Activated CD4-positive, alpha-beta memory T cell treated with anti-CD3 and anti-CD28 coated beads for 36 hours (primary cell): ENCODE measurements at regions of chr3 and their contacts with region 1.

Region 1: GRCh38 chr3:12193485-12194165 is 34.9 kb upstream of the TIMP4 start:
- DNase-seq: peak; percentile 66
- H3K4me3 Mint-ChIP-seq: no peak overlapping the region
- H3K27ac Mint-ChIP-seq: peak overlapping the region; percentile 84
- H3K4me1 Mint-ChIP-seq: peaks cover 54% of the 10 kb centered on the region
- H3K27me3 Mint-ChIP-seq: peaks cover 7% of the 10 kb centered on the region

Region 2: DNA sequence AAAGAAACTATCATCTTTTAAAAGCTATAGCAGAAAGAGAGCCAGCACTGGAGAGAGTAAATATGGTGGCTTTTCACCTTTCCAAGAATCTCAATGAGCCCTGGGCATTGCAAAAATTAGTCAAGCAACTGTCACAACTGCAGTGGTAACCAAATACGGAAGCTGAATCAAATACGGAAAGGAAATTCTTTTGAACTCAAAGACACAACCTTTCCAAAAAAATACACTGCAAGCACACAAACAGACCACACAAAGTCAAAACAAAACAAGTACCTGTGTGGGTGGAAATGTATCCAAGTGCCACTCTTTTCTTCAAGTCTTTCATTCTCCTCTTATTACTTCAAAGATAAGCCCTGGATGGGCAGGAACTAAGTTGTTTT is 567.6 kb before region 1 on chr3:
- CTCF ChIA-PET with region 1: no interaction called
- POLR2A ChIA-PET with region 1: no interaction called
- intact Hi-C with region 1: loop called (anchors 5 kb)
- DNase-seq: peak; percentile 38
- H3K4me3 Mint-ChIP-seq: no peak overlapping the region
- H3K27ac Mint-ChIP-seq: peak overlapping the region; percentile 4
- H3K4me1 Mint-ChIP-seq: peaks cover 59% of the 10 kb centered on the region
- H3K27me3 Mint-ChIP-seq: peaks cover 1% of the 10 kb centered on the region

Region 3: GRCh38 chr3:12135029-12135657 is 58.5 kb before region 1 on chr3:
- CTCF ChIA-PET with region 1: interaction called, 24 read pairs
- POLR2A ChIA-PET with region 1: no interaction called
- intact Hi-C with region 1: loop called (anchors 2 kb)
- DNase-seq: peak; percentile 78
- H3K4me3 Mint-ChIP-seq: no peak overlapping the region
- H3K27ac Mint-ChIP-seq: no peak overlapping the region
- H3K4me1 Mint-ChIP-seq: no peaks in the 10 kb centered on the region
- H3K27me3 Mint-ChIP-seq: peaks cover 12% of the 10 kb centered on the region

Region 4: GRCh38 chr3:12232785-12233300 is 39.2 kb after region 1 on chr3:
- CTCF ChIA-PET with region 1: no interaction called
- POLR2A ChIA-PET with region 1: no interaction called
- intact Hi-C with region 1: loop called (anchors 2 kb)
- DNase-seq: peak; percentile 17
- H3K4me3 Mint-ChIP-seq: no peak overlapping the region
- H3K27ac Mint-ChIP-seq: no peak overlapping the region
- H3K4me1 Mint-ChIP-seq: peaks cover 12% of the 10 kb centered on the region
- H3K27me3 Mint-ChIP-seq: peaks cover 22% of the 10 kb centered on the region

Region 5: GRCh38 chr3:12287727-12288191 is 94.1 kb after region 1 on chr3:
- CTCF ChIA-PET with region 1: no interaction called
- POLR2A ChIA-PET with region 1: no interaction called
- intact Hi-C with region 1: no loop called
- DNase-seq: peak; percentile 19
- H3K4me3 Mint-ChIP-seq: peak overlapping the region; percentile 43
- H3K27ac Mint-ChIP-seq: no peak overlapping the region
- H3K4me1 Mint-ChIP-seq: peaks cover 10% of the 10 kb centered on the region
- H3K27me3 Mint-ChIP-seq: peaks cover 43% of the 10 kb centered on the region

Region 6: DNA sequence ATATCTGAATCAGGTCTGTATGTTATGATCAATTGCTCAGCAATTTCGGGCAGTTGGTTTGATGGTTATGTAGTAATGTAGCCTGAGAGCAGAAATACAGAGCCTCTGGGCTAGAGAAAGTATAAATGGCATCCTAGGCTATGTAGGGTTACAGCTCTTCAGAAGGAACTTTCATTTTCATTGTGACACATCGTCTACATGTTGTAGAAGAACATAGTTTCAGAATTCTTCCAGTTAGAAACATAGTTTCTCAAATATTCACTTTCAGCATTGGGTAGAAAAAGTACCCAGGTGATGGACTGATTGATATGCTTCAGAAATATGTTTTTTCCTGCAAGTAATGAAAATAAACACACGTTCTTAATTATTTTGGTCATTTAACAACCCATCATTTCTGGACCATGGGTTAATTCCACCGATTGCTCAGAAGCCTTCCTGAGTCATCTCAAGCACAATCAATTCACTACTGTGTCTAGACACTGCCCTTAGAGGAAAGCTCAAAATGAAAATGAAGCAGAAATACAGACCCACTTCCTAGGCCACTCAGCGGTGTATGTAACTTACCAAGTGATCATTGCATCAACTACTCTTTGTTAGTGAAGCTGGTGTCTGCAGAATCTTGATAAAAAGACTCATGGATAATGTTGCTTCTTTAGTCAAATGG is 201.9 kb after region 1 on chr3:
- CTCF ChIA-PET with region 1: no interaction called
- POLR2A ChIA-PET with region 1: no interaction called
- intact Hi-C with region 1: loop called (anchors 1 kb)
- DNase-seq: peak; percentile 46
- H3K4me3 Mint-ChIP-seq: peak overlapping the region; percentile 20
- H3K27ac Mint-ChIP-seq: peak overlapping the region; percentile 40
- H3K4me1 Mint-ChIP-seq: peaks cover 16% of the 10 kb centered on the region
- H3K27me3 Mint-ChIP-seq: peaks cover 27% of the 10 kb centered on the region

Region 7: GRCh38 chr3:12484198-12484974 is 290.8 kb after region 1 on chr3 and contains the start of gene TSEN2:
- CTCF ChIA-PET with region 1: interaction called, 15 read pairs
- POLR2A ChIA-PET with region 1: no interaction called
- intact Hi-C with region 1: no loop called
- DNase-seq: peak; percentile 97
- H3K4me3 Mint-ChIP-seq: peak within 1 kb of the TSS; percentile 99
- H3K27ac Mint-ChIP-seq: peak within 1 kb of the TSS; percentile 89
- H3K4me1 Mint-ChIP-seq: peaks cover 36% of the 10 kb centered on the region
- H3K27me3 Mint-ChIP-seq: no peaks in the 10 kb centered on the region
- total RNA-seq, gene TSEN2: 13.8 to 15.4 TPM

Region 8: DNA sequence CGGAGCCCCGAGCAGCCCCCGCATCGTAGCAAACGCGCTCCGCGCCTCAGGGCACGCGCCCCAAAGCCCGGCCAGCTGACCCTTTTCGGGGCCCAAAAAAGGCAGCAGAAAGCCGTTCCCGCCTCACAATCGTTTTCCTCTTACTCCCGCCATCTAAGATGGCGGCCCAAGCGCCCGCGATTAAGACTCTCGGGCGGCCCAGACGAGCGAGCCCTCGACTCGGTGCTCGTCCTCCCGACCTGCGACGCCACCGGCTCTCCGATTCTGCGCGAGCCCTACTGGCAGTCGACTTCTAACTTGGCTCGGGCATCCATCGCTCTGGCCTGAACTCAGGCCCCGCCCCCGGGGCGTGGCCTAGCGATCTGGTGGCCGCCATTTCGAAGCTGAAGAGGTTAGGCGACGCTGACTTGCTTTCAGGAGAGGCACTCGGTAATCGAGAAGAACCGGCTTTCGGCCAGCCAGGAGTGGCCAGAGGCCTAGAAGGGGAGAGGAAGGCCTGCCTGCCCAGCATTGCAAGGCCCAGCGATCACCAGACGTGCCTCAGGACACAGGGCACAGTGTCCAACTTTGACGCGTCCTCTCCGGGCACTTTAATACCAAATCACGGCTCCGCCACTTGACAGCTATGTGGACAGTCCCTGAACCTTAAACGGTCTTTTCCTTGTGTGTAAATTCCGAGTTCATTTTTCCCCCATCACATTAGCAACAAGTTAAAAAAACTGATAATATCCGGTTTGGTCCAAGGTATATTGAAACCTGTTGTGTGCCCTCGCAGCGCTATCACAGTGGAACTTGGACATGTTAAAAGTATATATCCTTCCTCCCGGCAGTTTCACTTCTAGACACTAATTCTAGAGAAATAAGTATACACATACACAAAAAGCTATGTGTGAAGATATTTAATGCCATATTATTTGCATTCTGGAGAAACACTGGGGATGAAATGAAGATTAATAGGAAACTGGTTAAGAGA is 470.6 kb after region 1 on chr3 and contains the start of gene RAF1:
- CTCF ChIA-PET with region 1: no interaction called
- POLR2A ChIA-PET with region 1: no interaction called
- intact Hi-C with region 1: loop called (anchors 2 kb)
- DNase-seq: peak; percentile 98
- H3K4me3 Mint-ChIP-seq: peak within 1 kb of the TSS; percentile 88
- H3K27ac Mint-ChIP-seq: peak within 1 kb of the TSS; percentile 87
- H3K4me1 Mint-ChIP-seq: peaks cover 29% of the 10 kb centered on the region
- H3K27me3 Mint-ChIP-seq: no peaks in the 10 kb centered on the region
- total RNA-seq, gene RAF1: 64.6 to 66.9 TPM